ENCODE measurements at regions of chr2 and their contacts with region 1.

Region 1: DNA sequence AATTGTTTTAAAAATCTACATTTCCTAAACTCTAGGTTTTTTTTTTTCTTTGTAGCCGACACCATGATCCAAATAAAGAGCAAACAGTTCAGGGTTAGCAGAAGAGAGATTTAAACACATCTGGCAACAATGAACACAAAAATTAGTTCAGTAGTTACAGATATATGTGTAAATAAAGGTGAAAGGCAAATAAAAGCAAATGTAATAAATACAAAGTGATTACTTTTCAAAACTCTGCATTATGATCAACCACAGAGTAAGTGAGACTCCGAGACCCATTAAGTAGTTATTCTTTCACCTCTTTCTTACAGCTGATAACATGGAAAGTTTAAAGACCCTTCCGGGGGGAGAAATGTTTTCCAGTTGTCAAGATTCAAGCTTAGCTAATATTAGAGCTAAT is 716 bp downstream of the CALCRL start:
- DNase-seq: no peak
- ATAC-seq: no peak
- H3K4me3 Mint-ChIP-seq: 0 out of 2 replicates have a peak overlapping the region, but pooled peaks have one; percentile 11
- H3K27ac Mint-ChIP-seq: no peak overlapping the region
- H3K4me1 Mint-ChIP-seq: peaks cover 13% of the 10 kb centered on the region
- H3K27me3 Mint-ChIP-seq: no peaks in the 10 kb centered on the region
- CTCF ChIP-seq: no peak

Region 2: DNA sequence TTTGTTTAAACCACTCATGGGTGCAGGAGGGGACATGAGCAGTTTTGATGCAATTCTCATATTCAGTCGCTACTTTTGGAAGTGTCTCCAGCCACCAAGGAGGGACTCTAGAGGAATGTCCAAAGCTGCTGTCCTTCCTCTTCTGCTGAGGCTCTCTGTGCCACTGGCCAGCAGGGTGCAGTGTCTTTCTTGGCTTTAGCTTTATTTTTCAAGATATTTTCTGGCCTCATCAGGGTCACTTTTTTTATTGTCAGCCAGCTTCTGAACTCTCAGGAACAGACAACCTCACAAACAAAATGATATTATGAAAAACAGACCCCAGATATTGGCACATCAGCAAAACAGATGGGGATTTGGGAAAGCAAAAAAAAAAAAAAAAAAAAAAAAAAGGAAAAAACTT is 309.1 kb before region 1 on chr2:
- CTCF ChIA-PET with region 1: interaction called, 21 read pairs
- POLR2A ChIA-PET with region 1: interaction called, 3 read pairs
- DNase-seq: peak; percentile 52
- ATAC-seq: peak; percentile 96
- H3K4me3 Mint-ChIP-seq: no peak overlapping the region
- H3K27ac Mint-ChIP-seq: no peak overlapping the region
- H3K4me1 Mint-ChIP-seq: no peaks in the 10 kb centered on the region
- H3K27me3 Mint-ChIP-seq: no peaks in the 10 kb centered on the region
- CTCF ChIP-seq: no peak

Region 3: DNA sequence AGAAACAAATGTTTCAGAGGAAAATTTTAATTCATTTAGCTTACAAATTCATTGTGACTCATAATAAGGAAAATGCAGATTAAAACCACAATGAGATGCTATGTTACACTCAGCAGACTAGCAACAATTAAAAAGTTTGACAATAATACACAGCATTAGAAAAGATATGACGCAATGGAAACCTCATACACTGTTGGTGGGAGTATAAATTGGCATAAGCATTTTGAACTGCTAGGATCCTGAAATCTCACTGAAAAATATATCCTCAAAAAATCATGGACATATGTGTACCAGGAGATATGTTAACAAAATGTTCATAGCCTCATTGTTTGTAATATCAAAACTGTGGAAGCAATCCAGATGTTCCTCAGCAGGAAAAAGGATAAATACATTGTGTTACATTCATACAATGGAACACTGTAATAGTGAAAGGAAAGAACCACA is 13.0 kb before region 1 on chr2:
- CTCF ChIA-PET with region 1: no interaction called
- POLR2A ChIA-PET with region 1: no interaction called
- DNase-seq: no peak
- ATAC-seq: no peak
- H3K4me3 Mint-ChIP-seq: no peak overlapping the region
- H3K27ac Mint-ChIP-seq: no peak overlapping the region
- H3K4me1 Mint-ChIP-seq: no peaks in the 10 kb centered on the region
- H3K27me3 Mint-ChIP-seq: no peaks in the 10 kb centered on the region
- CTCF ChIP-seq: no peak